ENCODE measurements at regions of chr11 and their contacts with region 1.

Region 1: DNA sequence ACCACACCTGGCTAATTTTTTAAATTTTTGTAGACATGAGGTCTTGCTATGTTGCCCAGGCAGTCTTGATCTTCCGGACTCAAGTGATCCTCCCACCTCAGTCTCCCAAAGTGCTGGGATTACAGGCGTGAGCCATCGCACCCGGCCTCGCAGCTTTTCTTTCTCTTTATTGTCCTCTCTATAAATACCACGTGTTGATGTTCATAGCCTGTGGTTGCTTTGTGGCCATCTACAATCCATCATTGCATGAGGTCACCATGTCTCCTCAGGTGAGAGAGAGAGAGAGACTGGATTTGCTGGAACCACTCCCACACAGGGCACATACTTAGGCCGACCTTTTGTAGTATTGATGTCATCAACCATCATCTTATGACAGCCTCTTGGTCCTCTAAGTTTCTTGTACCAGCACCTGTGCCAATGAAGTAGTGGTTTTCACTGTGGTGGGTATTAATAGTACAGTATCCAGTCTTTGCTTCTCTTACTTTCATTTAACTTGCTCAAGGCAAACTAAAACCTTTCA is 22.9 kb upstream of the P2RY6 start:
- DNase-seq: no peak
- ATAC-seq: peak in 2 of 4 donors; percentile 24 to 54
- H3K4me3 ChIP-seq: no peak overlapping the region
- H3K27ac ChIP-seq: no peak overlapping the region
- H3K4me1 ChIP-seq: peaks cover 0 to 3% (median 0%) of the 10 kb centered on the region in 12 donors
- H3K27me3 ChIP-seq: no peaks in the 10 kb centered on the region
- CTCF ChIP-seq: no peak
- POLR2A ChIP-seq: no peak

Region 2: GRCh38 chr11:72102946-72103753 is 1146.1 kb before region 1 on chr11 and contains the start of gene LAMTOR1:
- intact Hi-C with region 1: no loop called
- DNase-seq: peak; percentile 99 to 100 (median 99)
- ATAC-seq: peak; percentile 98 to 100 (median 99)
- H3K4me3 ChIP-seq: peak within 1 kb of the TSS; percentile 70 to 98 (median 90)
- H3K27ac ChIP-seq: peak within 1 kb of the TSS; percentile 91 to 99 (median 96)
- H3K4me1 ChIP-seq: peaks cover 7 to 48% (median 32%) of the 10 kb centered on the region in 12 donors
- H3K27me3 ChIP-seq: no peaks in the 10 kb centered on the region
- CTCF ChIP-seq: peak in 9 of 12 donors; percentile 29 to 60 (median 48)
- POLR2A ChIP-seq: peak in 1 of 2 donors; percentile 64
- total RNA-seq, gene LAMTOR1: 68.7 to 119 (median 84.8) TPM

Region 3: DNA sequence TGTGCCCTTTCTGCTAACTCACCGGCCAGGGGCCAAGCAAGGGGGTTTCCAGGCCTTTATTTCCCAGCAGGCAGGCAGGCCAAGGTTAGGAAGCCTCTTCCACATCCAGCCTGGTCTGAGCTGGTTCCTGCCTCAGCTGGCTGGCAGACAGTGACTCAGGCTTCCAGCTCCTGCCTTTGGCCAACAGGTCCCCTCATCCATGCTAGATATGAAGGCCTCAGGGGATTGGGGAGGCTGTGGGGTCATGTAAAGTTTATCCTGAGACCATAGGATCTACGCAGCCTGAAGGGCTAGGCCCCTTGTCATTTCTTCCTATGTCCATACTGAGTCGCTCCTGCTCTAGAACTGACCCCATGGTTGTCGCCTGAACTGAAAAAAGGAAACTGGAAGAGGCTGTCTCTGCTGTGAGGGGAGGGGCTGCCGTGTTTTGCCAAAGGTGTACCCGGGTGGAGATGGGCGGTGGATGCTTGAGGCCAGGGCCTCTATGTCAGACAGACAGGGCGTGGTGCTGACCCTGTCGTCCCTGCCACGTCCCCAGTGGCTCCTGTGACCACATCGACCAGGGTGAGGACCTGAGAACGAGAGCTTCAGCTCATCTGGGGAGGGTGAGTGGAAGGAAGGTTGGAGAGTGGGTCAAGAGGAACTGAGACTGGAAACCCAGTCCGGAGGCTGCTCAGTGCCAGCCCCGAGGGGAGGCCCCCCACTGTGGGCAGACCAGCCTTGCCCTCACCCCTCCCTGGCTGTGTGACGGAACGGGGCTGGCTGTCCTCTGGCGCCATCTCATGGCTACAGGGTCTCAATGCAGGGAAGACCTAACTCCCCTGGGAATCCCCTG is 39.9 kb after region 1 on chr11:
- intact Hi-C with region 1: loop called in 5 of 10 experiments (anchors 5 to 10 kb)
- DNase-seq: peak; percentile 78 to 88 (median 83)
- ATAC-seq: peak; percentile 57 to 84 (median 80)
- H3K4me3 ChIP-seq: peak overlapping the region in 9 of 12 donors; percentile 14 to 54 (median 41)
- H3K27ac ChIP-seq: peak overlapping the region in 11 of 12 donors; percentile 19 to 95 (median 58)
- H3K4me1 ChIP-seq: peaks cover 0 to 67% (median 29%) of the 10 kb centered on the region in 12 donors
- H3K27me3 ChIP-seq: no peaks in the 10 kb centered on the region
- CTCF ChIP-seq: peak; percentile 88 to 96 (median 92)
- POLR2A ChIP-seq: no peak

Region 4: GRCh38 chr11:73429121-73429750 is 180.0 kb after region 1 on chr11:
- intact Hi-C with region 1: no loop called
- DNase-seq: no peak
- ATAC-seq: no peak
- H3K4me3 ChIP-seq: no peak overlapping the region
- H3K27ac ChIP-seq: no peak overlapping the region
- H3K4me1 ChIP-seq: peaks cover 0 to 31% (median 12%) of the 10 kb centered on the region in 12 donors
- H3K27me3 ChIP-seq: no peaks in the 10 kb centered on the region
- CTCF ChIP-seq: no peak
- POLR2A ChIP-seq: no peak

Region 5: DNA sequence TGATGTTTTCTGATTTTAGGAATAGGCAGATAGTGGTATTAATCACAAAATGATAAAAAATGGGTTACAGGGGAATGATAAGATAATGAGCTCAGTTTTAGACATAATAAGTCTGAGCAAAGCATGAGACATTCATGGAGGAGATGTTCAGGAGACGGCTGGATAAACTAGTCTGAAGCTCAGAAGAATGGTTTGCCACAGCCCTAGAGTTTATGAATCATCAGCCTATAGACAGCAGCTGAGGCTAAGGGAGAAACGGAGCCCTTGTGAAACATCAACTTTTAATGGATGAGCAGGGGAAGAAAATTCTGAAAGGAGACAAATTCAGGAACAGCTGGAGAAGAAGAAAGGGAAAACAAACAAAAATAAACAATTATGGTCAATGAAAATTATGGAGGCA is 214.1 kb after region 1 on chr11:
- intact Hi-C with region 1: no loop called
- DNase-seq: no peak
- ATAC-seq: no peak
- H3K4me3 ChIP-seq: no peak overlapping the region
- H3K27ac ChIP-seq: peak overlapping the region in 3 of 12 donors; percentile 4 to 60 (median 37)
- H3K4me1 ChIP-seq: peaks cover 0 to 84% (median 44%) of the 10 kb centered on the region in 12 donors
- H3K27me3 ChIP-seq: no peaks in the 10 kb centered on the region
- CTCF ChIP-seq: no peak
- POLR2A ChIP-seq: no peak

Region 6: DNA sequence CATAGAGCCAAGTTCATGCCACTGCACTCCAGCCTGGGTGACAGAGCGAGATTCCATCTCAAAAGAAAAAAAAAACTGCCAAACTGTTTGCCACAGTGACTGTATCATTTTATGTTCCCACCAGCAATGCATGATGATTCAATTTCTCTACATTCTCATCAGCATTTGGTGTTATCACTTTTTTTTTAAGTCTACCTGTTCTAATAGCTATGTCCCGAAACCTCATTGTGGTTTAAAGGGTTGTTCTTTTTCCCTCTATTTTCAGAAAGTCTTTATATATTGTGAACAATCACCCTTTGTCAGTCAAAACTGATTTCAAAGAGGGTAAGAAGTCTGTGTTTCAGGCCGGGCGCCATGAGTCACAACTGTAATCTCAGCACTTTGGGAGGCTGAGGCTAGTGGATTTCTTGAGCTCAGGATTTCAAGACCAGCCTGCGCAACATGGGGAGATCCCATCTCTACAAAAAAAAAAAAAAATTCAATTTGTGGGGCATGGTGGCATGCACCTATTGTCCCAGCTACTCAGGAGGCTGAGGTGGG is 363.4 kb after region 1 on chr11:
- intact Hi-C with region 1: no loop called
- DNase-seq: no peak
- ATAC-seq: no peak
- H3K4me3 ChIP-seq: no peak overlapping the region
- H3K27ac ChIP-seq: no peak overlapping the region
- H3K4me1 ChIP-seq: no peaks in the 10 kb centered on the region
- H3K27me3 ChIP-seq: no peaks in the 10 kb centered on the region
- CTCF ChIP-seq: no peak
- POLR2A ChIP-seq: no peak

Measured in heart left ventricle (tissue), 16 donors.